ENCODE measurements at regions of chr12 and their contacts with region 1.

Region 1: GRCh38 chr12:50992819-50993218 is 33.4 kb downstream of the SLC11A2 start:
- DNase-seq: no peak
- ATAC-seq: peak; percentile 26
- H3K4me3 ChIP-seq: no peak overlapping the region
- H3K27ac ChIP-seq: no peak overlapping the region
- H3K4me1 ChIP-seq: no peaks in the 10 kb centered on the region
- H3K27me3 ChIP-seq: no peaks in the 10 kb centered on the region
- CTCF ChIP-seq: no peak

Region 2: DNA sequence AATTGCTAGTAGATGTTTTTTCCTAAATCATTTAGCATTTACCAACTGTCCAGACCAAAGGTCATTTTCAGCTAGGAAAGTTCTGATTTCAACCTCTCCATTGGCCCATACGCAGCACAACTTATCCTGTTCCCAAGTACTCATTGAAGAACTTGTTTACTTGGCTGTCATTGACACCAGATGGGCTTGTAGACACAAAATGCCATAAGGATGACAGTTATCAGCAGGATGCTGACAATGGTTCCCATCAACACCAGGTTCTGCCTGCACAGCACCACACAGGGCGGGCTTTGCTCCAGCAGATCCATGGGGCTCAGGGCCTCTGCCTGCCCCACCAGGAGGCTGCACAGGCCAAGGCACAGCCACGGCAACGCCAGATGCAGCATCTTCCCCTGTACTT is 186.6 kb before region 1 on chr12:
- intact Hi-C with region 1: loop called (anchors 10 kb)
- DNase-seq: no peak
- ATAC-seq: no peak
- H3K4me3 ChIP-seq: no peak overlapping the region
- H3K27ac ChIP-seq: no peak overlapping the region
- H3K4me1 ChIP-seq: no peaks in the 10 kb centered on the region
- H3K27me3 ChIP-seq: no peaks in the 10 kb centered on the region
- CTCF ChIP-seq: no peak

Region 3: DNA sequence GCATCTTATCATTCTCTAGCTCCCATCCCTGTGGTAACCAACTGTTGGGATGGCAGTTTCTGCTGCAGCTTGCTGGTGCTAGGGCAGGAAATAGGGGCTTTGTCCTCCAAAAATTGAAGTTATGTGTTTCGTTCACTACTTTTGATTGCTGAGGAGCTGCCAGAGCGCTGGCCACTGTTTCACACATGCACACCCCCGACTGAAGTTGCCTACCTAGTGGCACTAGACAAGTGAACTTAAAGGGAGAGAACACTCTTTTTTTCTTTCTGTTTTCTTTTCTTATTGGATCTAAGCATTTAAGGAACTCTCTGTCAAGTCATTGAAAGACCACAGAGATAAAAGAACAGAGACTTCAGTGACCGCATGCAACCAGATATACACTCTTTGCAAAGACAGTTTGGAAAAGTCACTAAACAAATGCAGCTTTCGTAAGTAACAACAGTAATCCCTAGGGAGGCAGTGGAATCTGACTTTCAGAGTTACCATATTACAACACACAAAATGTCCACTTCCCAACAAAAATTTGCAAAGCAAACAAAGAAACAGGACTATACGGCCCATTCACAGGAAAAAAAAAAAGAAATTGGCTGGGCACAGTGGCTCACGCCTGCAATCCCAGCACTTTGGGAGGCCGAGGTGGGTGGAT is 168.1 kb after region 1 on chr12:
- intact Hi-C with region 1: no loop called
- DNase-seq: no peak
- ATAC-seq: no peak
- H3K4me3 ChIP-seq: no peak overlapping the region
- H3K27ac ChIP-seq: no peak overlapping the region
- H3K4me1 ChIP-seq: no peaks in the 10 kb centered on the region
- H3K27me3 ChIP-seq: no peaks in the 10 kb centered on the region
- CTCF ChIP-seq: no peak

Measured in upper lobe of right lung (tissue), 1 donor.